Psoas muscle (tissue), 8 donors: ENCODE measurements at regions of chr3 and their contacts with region 1.

Region 1: GRCh38 chr3:73605412-73605811 is 19.3 kb downstream of the PDZRN3 start:
- DNase-seq: no peak
- ATAC-seq: peak in 3 of 4 donors; percentile 29 to 39 (median 37)
- H3K4me3 ChIP-seq: no peak overlapping the region
- H3K27ac ChIP-seq: peak overlapping the region; percentile 91
- H3K4me1 ChIP-seq: peaks cover 83% of the 10 kb centered on the region
- H3K27me3 ChIP-seq: no peaks in the 10 kb centered on the region
- CTCF ChIP-seq: no peak

Region 2: GRCh38 chr3:73591286-73591800 is 14.1 kb before region 1 on chr3:
- intact Hi-C with region 1: loop called in 1 of 2 experiments (anchors 2 kb)
- DNase-seq: no peak
- ATAC-seq: no peak
- H3K4me3 ChIP-seq: no peak overlapping the region
- H3K27ac ChIP-seq: peak overlapping the region; percentile 41
- H3K4me1 ChIP-seq: peaks cover 30% of the 10 kb centered on the region
- H3K27me3 ChIP-seq: no peaks in the 10 kb centered on the region
- CTCF ChIP-seq: no peak

Region 3: GRCh38 chr3:73706771-73707170 is 101.4 kb after region 1 on chr3:
- intact Hi-C with region 1: no loop called
- DNase-seq: no peak
- ATAC-seq: no peak
- H3K4me3 ChIP-seq: no peak overlapping the region
- H3K27ac ChIP-seq: no peak overlapping the region
- H3K4me1 ChIP-seq: peaks cover 9% of the 10 kb centered on the region
- H3K27me3 ChIP-seq: no peaks in the 10 kb centered on the region
- CTCF ChIP-seq: no peak